ENCODE measurements at regions of chr6 and their contacts with region 1.

Region 1: DNA sequence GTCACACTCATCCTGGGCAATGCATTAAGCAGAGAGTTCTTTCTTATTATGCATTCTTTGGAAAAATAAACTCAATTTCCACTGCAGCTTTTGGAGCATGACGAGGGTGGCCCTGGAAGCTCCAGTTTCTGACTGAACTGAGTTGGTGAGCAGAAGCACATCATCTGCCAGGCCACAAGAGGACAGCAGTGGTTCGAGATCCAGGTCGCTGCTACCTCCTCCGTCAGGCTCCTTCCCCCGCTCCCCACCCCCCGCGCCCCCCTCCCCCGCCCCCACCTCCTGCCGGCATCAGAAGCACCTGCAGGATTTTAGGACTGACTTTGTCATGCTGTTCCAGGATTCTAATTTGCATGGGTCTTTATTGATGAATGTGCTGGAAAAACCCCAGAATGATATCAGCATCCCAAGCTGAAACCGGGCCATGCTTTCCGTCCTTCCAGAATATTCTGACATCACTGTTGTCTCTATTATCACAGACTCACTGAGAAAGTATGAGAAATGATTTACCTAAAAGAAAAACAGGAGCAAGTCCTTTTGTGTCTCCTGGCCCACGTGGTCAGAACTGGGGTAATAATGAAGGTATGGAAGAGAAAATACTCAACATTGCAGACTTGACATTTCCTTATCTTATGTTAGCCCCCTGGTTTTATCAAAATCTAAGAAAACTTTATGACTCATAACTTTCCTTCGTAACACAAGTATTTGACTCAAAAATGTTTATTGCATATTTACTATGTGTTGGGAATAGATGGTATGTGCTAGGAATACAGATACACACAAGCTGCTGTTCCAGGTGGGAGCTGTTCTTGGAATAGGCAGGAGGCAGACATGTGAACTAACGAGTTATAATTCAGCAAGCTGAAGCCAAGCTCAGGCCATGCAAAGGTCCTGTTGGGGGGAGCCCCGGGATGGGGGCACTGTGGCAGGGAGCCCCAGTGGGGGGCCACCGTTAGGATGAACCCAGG is 220.2 kb upstream of the EXOC2 start:
- DNase-seq: peak; percentile 70
- ATAC-seq: peak; percentile 93
- H3K4me3 Mint-ChIP-seq: no peak overlapping the region
- H3K27ac Mint-ChIP-seq: no peak overlapping the region
- H3K4me1 Mint-ChIP-seq: peaks cover 10% of the 10 kb centered on the region
- H3K27me3 Mint-ChIP-seq: peaks cover 19% of the 10 kb centered on the region
- CTCF ChIP-seq: peak; percentile 28; the same call in 1 of the 2 replicates

Region 2: DNA sequence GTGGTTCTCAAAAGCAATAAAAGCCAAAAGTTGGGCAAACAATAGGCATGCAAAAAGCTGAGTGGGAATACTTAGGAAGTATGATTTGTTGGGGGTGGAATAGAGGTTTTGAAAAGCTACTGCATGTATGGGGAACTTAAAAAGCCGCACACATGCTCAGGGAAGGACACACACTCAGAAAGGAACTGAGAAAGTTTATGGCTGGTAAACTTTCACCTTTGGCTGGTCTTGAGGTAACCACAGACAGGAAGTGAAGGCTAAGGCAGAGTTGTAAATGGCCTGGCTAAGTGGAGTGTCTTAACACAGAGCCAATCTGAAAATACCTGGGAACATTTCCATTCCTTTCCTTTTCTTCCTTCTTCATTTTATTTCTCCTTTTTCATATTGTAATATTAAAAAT is 85.7 kb before region 1 on chr6:
- CTCF ChIA-PET with region 1: no interaction called
- POLR2A ChIA-PET with region 1: no interaction called
- DNase-seq: no peak
- ATAC-seq: no peak
- H3K4me3 Mint-ChIP-seq: no peak overlapping the region
- H3K27ac Mint-ChIP-seq: no peak overlapping the region
- H3K4me1 Mint-ChIP-seq: peaks cover 19% of the 10 kb centered on the region
- H3K27me3 Mint-ChIP-seq: peaks cover 8% of the 10 kb centered on the region
- CTCF ChIP-seq: no peak

Region 3: GRCh38 chr6:885051-885590 is 28.0 kb before region 1 on chr6:
- CTCF ChIA-PET with region 1: no interaction called
- POLR2A ChIA-PET with region 1: no interaction called
- DNase-seq: no peak
- ATAC-seq: no peak
- H3K4me3 Mint-ChIP-seq: no peak overlapping the region
- H3K27ac Mint-ChIP-seq: no peak overlapping the region
- H3K4me1 Mint-ChIP-seq: peaks cover 5% of the 10 kb centered on the region
- H3K27me3 Mint-ChIP-seq: no peaks in the 10 kb centered on the region
- CTCF ChIP-seq: no peak

Region 4: DNA sequence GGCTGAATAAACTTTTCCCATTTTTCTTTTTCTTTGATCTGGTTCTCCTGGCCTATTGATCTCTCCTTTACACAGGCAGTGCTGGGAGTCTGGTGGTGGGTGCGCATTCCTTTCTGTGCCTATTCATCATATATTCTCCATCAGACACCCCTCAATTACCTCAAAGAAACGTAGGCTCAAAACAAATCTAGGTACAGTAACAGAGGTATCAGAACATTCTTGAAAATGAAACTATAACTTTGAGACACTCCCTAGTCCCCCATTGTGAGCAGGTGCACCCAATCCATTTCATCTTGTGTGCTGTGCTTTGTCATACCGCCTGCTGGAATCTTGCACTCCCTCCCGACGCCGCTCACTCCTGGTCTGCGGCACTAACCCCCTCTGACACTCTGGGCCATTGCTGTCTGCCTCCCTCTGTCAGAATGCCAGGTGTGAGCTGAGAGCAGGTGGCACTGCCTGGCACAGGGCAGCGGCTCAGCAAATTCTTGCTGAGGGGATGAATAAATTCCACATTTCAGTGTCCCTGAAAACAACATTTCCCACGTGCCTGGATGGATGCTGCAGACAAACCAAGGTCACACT is 83.2 kb after region 1 on chr6:
- CTCF ChIA-PET with region 1: no interaction called
- POLR2A ChIA-PET with region 1: no interaction called
- DNase-seq: no peak
- ATAC-seq: no peak
- H3K4me3 Mint-ChIP-seq: no peak overlapping the region
- H3K27ac Mint-ChIP-seq: no peak overlapping the region
- H3K4me1 Mint-ChIP-seq: no peaks in the 10 kb centered on the region
- H3K27me3 Mint-ChIP-seq: no peaks in the 10 kb centered on the region
- CTCF ChIP-seq: no peak

Region 5: GRCh38 chr6:1311400-1312202 is 398.4 kb after region 1 on chr6 and contains the start of gene FOXQ1:
- CTCF ChIA-PET with region 1: interaction called, 15 read pairs
- POLR2A ChIA-PET with region 1: no interaction called
- DNase-seq: peak; percentile 70
- ATAC-seq: peak; percentile 40
- H3K4me3 Mint-ChIP-seq: peak within 1 kb of the TSS; percentile 84
- H3K27ac Mint-ChIP-seq: no peak within 1 kb of the TSS
- H3K4me1 Mint-ChIP-seq: peaks cover 33% of the 10 kb centered on the region
- H3K27me3 Mint-ChIP-seq: peaks cover 95% of the 10 kb centered on the region
- CTCF ChIP-seq: no peak
- total RNA-seq, gene FOXQ1: 0.25 to 0.35 TPM (median 0.30 TPM) in 3 replicates

Measured in WTC11 (cell line).